Left colon (tissue), 2 donors: ENCODE measurements at regions of chr5 and their contacts with region 1.

Region 1: DNA sequence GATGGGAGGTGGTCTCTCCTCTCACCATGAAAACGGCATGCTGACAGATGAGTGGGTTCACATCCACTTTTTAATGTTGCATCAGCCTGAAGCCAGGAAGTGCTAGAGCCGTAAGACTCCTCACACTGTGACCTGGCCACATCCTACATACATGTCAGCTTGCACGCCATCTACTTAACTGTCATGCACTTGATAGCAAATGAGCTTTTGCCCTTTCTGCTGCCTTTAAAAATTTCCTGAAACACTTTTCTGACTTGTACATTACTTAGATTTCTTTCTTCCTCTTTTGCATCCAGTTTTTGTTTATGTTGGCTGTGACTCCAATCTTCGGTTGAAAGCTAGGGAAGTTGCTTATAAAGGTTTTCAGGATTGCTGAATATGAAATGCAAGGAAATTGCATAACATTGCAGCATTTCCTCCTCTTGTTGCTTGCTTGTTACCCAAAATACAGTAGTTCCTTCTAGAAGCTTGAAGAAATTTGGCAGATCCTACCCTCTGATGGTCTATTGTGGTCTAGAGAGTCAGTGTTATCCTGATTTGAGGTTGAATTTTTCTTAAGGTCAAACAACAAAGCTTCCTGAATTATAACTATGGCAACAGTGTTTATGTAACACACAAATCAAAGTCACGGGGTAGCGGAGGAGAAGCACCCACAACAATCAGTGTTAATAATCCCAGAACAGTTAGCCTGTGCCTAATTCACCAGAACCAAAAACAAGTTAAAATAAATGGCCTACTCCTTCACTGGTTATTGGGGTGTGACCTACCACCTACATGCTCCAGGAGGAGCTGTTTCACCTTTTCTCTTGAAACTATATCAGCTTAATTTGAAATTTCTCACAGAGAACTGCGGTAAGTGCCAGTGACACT is 232.5 kb downstream of the ARHGAP26 start:
- DNase-seq: peak; percentile 22 to 42
- ATAC-seq: peak; percentile 46

Region 2: GRCh38 chr5:143281226-143281625 is 278.5 kb after region 1 on chr5:
- intact Hi-C with region 1: no loop called
- DNase-seq: no peak
- ATAC-seq: no peak

Region 3: DNA sequence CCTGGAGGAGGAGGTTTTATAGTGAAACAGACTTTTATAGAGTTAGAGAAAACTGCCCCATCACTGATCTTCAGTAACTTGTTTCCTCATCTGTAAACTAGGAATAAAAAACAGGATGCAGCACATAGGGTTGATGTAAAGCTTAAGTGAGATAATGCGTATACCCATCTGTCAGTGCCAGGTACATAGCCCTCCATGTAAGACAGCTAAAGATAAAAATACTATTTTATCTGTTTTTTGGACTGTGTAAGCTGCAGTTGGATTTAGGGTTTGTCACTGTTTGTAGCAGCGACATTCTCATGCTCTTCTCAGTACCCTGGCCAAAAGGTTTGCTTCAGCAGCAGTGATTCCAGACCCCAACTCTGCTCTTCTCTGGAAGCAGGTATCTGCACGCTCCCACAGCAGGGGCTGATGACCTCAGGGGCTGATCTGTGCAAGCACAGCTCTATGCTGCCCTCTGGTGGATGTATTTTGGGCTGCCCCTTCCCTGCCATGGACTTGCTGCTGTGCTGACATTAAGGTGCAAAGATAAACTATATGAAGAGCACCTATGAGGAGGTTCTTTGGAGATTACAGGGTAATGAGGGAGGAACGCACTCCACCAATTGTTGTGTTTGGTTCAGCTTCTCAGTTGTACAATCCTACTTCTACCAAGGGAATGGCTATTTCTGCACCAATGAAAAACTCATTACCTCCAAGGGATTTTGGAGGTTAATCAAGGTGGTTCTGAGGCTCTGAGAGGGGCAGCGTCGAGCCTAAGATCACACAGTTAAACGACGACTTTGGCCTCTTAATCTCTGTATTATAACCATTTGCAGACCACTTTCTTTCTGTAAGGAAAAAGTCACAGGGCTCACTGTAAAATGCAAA is 822.4 kb after region 1 on chr5:
- intact Hi-C with region 1: loop called in 1 of 2 experiments (anchors 10 kb)
- DNase-seq: peak; percentile 58 to 88
- ATAC-seq: peak; percentile 90